ENCODE measurements at regions of chr4 and their contacts with region 1.

Region 1: DNA sequence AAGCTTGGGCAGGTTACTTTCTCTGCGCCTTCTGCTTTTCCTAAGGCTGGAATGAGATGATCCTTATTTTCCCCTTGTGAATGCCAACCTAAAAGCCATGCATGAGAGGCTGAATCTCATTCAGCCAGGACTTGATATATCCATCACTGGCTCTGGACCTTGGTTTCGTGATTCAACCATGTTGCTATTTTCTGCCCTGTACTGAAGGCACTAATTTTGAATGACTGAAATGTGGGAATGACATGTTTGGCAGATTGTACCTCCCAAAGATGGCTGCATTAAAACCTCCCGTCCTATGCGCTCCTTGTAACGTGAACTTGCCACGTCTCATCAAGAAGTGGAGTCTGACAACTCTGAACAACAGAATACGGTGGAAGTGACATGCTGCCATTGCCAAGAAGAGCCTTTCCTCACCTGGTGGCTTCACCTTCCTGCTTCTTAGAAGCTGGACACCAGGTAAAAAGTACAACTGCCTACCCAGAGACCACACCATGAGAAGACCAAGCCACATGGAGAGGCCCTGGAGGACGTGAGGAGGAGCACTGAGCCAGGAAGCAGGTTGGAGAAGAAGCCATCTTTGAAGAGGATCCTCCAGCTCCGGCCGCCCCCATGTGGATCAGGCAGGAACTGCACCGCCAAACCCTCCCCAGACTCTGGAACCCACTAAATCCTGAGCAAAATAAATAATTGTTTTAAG is 174.5 kb downstream of the NSUN7 start:
- DNase-seq: peak; percentile 78 to 93
- ATAC-seq: peak; percentile 74
- H3K4me3 ChIP-seq: no peak overlapping the region
- H3K27ac ChIP-seq: peak overlapping the region; percentile 73 to 90
- H3K4me1 ChIP-seq: peaks cover 0 to 8% of the 10 kb centered on the region in 2 donors
- H3K27me3 ChIP-seq: no peaks in the 10 kb centered on the region

Region 2: DNA sequence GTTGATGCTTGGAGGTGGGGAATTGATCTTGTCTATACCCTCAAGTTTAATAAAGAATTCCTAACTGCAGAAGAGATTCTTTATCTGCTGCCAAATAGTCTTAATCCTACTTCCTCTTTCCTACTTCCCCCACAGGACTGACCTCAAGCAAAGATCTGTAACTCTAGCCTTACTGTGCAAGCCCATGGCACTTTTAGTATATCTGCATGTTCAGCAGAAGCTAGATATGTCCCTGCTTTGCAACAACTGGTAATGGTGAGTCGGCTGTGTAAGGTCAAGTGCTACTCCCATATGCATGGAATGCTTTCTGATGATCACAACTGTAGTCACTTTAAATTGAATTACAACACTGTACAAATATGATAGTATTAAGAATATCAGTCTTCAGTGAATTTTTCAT is 920.3 kb before region 1 on chr4:
- intact Hi-C with region 1: no loop called
- DNase-seq: no peak
- ATAC-seq: peak; percentile 46
- H3K4me3 ChIP-seq: no peak overlapping the region
- H3K27ac ChIP-seq: no peak overlapping the region
- H3K4me1 ChIP-seq: no peaks in the 10 kb centered on the region
- H3K27me3 ChIP-seq: no peaks in the 10 kb centered on the region

Region 3: DNA sequence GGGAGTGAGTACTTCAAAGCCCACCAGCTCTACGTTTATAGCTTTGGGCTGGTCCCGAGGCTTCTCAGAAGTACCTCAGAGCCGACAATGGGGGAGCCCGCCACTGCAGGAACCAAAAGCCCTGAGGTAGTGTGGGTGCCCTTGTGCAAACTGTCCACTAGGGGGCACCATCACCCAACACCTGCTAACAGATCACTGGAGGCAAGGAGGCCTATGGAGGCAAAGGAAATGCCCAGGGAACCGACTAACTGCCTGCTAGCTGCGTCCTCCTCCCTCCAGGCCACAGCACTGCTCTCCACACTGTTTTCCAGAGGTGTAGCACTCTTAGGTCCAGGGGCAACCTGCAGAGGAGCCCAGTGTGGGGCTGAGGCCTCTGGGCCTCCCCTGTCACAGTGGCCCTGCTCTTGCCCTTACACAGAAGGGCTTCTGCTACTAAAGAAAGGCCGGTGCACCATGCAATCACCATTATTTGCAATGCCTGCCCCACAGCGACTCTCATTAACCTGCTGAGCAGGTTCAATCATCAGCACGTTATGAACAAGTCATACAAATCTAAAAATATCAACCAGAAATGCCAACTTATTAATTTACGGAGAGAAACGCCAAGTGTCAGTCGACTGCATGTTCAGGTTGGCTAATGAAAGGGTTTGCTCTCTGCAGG is 15.4 kb before region 1 on chr4:
- intact Hi-C with region 1: loop called in 1 of 2 experiments (anchors 1 kb)
- DNase-seq: peak; percentile 84 to 88
- ATAC-seq: peak; percentile 90
- H3K4me3 ChIP-seq: no peak overlapping the region
- H3K27ac ChIP-seq: peak overlapping the region; percentile 62 to 97
- H3K4me1 ChIP-seq: peaks cover 0 to 3% of the 10 kb centered on the region in 2 donors
- H3K27me3 ChIP-seq: peaks cover 0 to 1% of the 10 kb centered on the region in 2 donors

Region 4: DNA sequence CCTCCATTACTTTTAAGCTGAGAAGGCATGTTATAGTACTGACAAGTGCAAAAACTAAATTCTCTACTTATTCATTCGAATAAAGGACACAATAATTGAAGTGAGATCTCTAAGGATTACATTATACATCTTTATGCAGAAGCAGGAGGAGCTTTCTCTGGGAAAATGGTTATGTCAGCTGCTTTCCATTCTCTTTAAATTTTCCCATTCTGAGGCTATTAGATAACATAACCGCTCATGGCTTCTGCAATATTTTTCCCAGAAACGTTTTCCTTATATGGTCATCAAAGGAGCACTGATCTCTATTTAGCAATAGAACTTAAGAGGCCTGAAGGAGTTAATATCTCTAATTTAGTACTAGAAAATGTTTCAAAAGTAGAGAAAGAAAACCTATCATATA is 47.1 kb after region 1 on chr4:
- intact Hi-C with region 1: loop called (anchors 2 to 5 kb)
- DNase-seq: no peak
- ATAC-seq: no peak
- H3K4me3 ChIP-seq: no peak overlapping the region
- H3K27ac ChIP-seq: no peak overlapping the region
- H3K4me1 ChIP-seq: peaks cover 5 to 8% of the 10 kb centered on the region in 2 donors
- H3K27me3 ChIP-seq: no peaks in the 10 kb centered on the region

Region 5: DNA sequence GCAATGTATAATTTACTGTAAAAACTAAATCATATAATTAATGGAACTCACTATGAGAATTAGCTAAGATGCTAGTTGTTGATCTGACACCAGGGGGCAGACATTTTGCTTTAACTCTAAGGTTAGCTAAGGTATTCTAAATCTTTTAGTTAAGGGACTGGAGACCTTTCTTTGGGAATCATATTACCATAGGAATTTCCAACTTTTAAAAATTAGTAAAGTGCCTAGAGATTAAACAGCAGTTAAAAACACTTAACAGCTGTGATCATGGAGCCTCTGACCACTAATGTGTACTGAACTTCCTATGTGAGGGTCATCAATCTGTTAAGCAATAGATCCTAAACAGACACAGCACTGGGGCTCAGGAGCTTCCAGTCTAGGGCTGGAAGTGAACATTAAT is 52.1 kb after region 1 on chr4:
- intact Hi-C with region 1: loop called (anchors 2 to 5 kb)
- DNase-seq: no peak
- ATAC-seq: no peak
- H3K4me3 ChIP-seq: no peak overlapping the region
- H3K27ac ChIP-seq: no peak overlapping the region
- H3K4me1 ChIP-seq: no peaks in the 10 kb centered on the region
- H3K27me3 ChIP-seq: no peaks in the 10 kb centered on the region

Region 6: DNA sequence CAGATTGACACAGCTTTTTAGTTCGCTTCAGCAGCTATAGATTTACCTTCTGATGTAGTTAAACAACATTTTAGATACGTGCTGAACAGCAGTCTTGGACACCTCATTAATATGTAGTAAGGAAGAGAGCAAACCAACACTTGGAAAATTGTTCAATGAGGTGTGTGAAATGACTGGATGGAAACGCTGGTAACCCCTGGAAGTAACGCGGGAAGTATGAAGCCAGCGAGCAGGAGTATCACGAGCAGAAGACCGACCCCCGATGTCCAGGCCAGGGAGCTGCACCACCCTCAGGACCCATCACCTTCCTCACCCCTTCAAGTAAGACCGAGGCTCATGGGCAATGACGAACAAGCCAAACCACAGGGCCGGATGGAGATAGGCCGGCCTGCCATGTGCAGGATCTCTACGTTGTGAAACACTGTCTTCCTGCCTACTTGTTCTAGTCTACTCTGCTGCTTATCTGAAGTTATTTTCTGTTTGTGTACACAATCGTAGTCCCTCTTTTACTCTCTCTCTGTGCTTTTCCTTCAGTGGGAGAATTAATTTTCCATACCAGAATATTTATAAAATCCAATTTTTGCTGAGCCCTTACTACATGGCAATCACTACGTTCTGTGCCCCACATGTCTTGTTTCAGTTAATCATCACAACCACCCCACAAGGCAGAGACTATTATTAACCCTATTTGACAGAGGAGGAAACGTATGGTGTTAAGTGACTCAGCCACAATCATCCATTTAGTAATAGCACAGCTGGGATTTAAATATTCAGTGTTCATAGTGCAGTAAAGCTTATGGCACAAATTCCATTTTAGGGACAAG is 68.4 kb after region 1 on chr4:
- intact Hi-C with region 1: no loop called
- DNase-seq: no peak
- ATAC-seq: no peak
- H3K4me3 ChIP-seq: no peak overlapping the region
- H3K27ac ChIP-seq: peak overlapping the region in 1 of 2 donors; percentile 40
- H3K4me1 ChIP-seq: peaks cover 3 to 9% of the 10 kb centered on the region in 2 donors
- H3K27me3 ChIP-seq: no peaks in the 10 kb centered on the region

Region 7: DNA sequence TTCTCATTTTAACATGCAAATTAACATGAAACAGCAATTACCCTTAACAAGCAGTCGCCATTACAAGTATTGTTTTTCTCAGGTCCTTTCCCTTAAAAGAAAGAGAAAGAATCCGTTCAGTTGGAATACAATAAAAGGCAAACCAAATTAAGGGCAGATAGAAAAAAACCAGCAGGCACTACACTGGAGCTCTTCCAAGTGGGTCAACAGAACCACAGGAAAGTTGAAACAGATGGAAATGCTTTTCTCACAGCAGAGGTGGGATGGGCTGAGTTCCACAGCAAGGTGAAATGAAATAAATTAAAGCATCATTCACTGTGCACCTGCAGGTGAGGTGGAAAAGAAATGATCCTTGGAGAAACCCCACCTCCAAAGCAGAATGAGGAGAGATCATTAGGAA is 187.5 kb after region 1 on chr4:
- intact Hi-C with region 1: no loop called
- DNase-seq: no peak
- ATAC-seq: no peak
- H3K4me3 ChIP-seq: no peak overlapping the region
- H3K27ac ChIP-seq: no peak overlapping the region
- H3K4me1 ChIP-seq: peaks cover 3% of the 10 kb centered on the region in 2 donors
- H3K27me3 ChIP-seq: no peaks in the 10 kb centered on the region

Measured in aorta (tissue), 5 donors.